PC-9 (cell line): ENCODE measurements at regions of chr10 and their contacts with region 1.

Region 1: GRCh38 chr10:86888585-86889381 is 68.6 kb downstream of the MMRN2 start:
- DNase-seq: no peak
- H3K4me3 ChIP-seq: no peak overlapping the region
- H3K27ac ChIP-seq: no peak overlapping the region
- H3K4me1 ChIP-seq: no peaks in the 10 kb centered on the region
- H3K27me3 ChIP-seq: no peaks in the 10 kb centered on the region
- CTCF ChIP-seq: no peak

Region 2: DNA sequence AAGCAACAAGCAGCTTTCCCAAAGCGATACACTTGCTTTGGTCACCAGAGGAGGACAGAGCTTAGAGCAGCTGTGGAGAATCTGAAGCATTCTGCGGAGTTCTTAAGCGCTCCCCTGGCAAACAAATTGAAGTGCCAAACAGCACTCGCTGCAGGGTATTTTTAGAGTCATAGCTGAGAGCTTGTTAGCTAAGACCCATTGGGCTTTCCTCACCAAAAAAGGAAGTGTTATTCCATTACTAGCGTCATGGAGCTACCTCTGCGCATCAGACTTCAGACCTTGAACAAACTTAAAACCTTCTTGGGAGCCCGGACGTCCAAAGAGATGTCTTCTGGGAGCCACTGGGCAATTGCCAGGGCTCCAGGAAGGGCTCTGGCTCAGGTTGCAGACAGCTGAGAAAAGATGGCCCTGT is 155.5 kb before region 1 on chr10:
- CTCF ChIA-PET with region 1: no interaction called
- POLR2A ChIA-PET with region 1: interaction called, 26 read pairs
- intact Hi-C with region 1: no loop called
- DNase-seq: no peak
- H3K4me3 ChIP-seq: no peak overlapping the region
- H3K27ac ChIP-seq: no peak overlapping the region
- H3K4me1 ChIP-seq: no peaks in the 10 kb centered on the region
- H3K27me3 ChIP-seq: no peaks in the 10 kb centered on the region
- CTCF ChIP-seq: no peak